Dorsolateral prefrontal cortex (tissue), 120 donors: ENCODE measurements at regions of chr14 and their contacts with region 1.

Region 1: DNA sequence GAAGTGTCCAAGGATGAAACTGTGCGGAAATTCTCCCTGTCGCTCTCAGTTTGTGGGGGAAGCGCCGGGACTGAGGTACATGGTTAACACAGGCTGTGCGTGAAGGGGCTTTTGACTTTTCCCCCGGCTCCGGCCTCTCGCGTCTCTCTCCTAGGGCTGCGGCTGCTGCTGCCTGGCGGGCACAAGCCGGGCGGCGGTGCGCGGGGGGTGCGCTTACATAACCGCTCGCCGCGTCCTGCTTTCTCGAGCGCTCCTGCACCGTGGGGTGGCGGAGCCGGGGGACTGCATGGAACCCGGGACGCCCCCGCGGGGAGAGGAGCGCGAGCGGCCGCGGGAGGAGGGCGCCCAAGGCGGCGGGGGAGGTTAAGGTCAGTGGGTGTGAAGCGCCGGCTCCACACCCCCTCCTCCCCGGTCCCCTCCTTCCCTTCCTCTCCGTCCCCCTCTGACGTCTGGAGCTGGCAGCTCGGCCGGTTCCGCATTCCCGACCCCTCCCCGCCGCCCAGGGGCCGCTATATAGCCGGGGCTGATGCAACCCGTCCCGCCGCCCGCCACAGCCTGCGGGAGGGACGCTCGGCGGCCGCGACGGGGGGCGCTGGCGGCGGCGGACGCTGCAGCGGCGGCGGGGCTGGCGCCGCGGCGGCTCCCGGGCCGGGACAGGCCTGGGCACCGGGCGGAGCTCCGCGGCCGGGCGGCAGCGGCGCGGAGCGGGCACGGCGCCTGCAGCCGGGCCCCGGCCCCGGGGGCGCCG is at the start of gene JDP2:
- DNase-seq: peak; percentile 65 to 85 (median 82)
- H3K4me3 ChIP-seq: peak within 1 kb of the TSS; percentile 57 to 84 (median 74)
- H3K27ac ChIP-seq: peak within 1 kb of the TSS; percentile 39 to 99 (median 94)
- H3K27me3 ChIP-seq: no peaks in the 10 kb centered on the region
- CTCF ChIP-seq: peak in 31 of 56 donors; percentile 7 to 39 (median 20)
- total RNA-seq, gene JDP2: 21.8 to 96.2 (median 36.8) TPM

Region 2: GRCh38 chr14:75372260-75372659 is 55.4 kb before region 1 on chr14:
- intact Hi-C with region 1: loop called in 1 of 2 experiments (anchors 2 kb)
- DNase-seq: peak; percentile 13 to 83 (median 73)
- H3K4me3 ChIP-seq: peak overlapping the region in 2 of 59 donors; percentile 10 to 17
- H3K27ac ChIP-seq: peak overlapping the region in 19 of 59 donors; percentile 0 to 58 (median 36)
- H3K27me3 ChIP-seq: no peaks in the 10 kb centered on the region
- CTCF ChIP-seq: peak in 8 of 56 donors; percentile 10 to 34 (median 14)

Region 3: GRCh38 chr14:75399821-75400678 is 27.6 kb before region 1 on chr14:
- intact Hi-C with region 1: loop called in 1 of 2 experiments (anchors 2 kb)
- DNase-seq: peak; percentile 37 to 95 (median 87)
- H3K4me3 ChIP-seq: no peak overlapping the region
- H3K27ac ChIP-seq: peak overlapping the region in 45 of 59 donors; percentile 3 to 78 (median 54)
- H3K27me3 ChIP-seq: no peaks in the 10 kb centered on the region
- CTCF ChIP-seq: no peak

Region 4: DNA sequence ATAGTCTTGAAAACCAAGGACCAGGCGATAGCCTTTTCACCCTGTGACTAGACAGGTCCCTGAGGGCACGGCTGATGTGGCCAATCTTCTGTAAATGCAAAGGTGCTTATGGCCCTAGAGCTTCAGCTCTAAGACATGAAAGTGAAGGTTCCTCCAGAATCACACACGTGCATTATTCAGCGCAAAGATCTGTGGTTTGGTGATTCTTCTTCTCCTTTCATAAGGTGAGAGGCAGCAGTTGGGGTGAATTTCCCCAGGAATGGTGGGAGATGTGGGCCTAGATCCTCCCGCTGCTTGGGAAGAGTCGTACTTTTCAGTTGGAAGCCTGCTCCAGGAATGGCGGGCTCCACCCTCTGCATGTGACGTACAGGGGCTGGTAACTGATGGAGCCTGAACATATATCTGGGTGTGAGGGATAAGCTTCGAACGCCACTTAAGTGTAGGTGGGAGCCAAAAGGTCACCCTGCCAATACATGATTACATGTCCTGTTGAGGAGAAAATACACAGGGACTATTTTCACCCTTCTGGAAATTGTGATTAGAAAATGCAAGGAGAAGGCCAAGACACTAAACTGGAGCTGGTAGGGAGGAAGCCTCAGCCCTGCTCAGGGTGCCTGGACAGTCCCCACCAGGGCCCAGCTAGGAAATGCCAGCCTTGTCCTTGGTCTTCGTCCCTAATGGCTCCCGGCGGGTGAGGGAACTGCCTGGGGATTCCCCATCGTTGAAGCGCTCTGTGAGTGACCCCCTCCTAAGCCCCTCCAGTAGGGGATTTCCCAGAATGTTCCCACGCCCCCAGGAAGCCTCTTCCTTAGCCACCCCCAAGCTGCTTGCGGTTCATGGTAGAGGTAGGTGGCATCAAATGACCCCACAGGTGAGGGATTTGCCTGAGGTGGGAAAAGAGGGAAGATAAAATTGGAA is 112.2 kb after region 1 on chr14:
- intact Hi-C with region 1: no loop called
- DNase-seq: no peak
- H3K4me3 ChIP-seq: no peak overlapping the region
- H3K27ac ChIP-seq: no peak overlapping the region
- H3K27me3 ChIP-seq: no peaks in the 10 kb centered on the region
- CTCF ChIP-seq: no peak